B cell (primary cell): ENCODE measurements at regions of chr3 and their contacts with region 1.

Region 1: DNA sequence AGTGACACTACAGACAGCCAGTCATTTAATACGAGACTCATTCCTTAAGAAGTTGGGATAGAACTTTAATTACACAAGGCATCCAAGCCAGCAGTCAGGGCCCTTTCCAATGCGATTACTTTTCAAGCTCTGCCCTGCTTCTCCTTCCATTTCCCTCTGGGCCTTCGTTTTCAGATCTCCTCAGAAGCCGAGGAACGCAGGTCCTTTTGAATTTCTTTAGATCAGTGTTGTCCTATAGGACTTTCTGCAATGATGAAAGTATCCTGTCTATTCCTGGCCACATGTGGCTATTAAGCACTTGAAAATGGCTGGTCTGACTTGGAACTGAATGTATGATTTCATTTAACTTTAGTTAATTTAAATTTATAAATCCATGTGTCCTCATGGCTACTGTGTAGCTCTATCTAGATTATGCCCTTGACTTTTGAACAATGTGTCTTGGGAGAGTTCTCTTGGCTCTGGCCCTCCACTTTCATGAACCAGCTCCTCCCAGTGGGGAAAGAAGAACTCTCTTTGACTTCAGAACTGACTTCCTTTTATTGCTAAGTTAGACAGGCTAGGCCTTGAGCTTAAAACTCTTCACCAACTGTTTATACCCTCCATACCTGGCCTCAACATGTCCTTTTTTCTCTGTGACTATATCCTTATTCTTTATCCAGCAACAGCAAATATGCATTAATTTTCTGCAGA is 22.6 kb downstream of the TGFBR2 start:
- DNase-seq: peak; percentile 75
- ATAC-seq: peak; percentile 54
- H3K4me3 ChIP-seq: peak overlapping the region in 3 of 5 experiments; percentile 2 to 46 (median 26)
- H3K4me3 Mint-ChIP-seq: peak overlapping the region; percentile 72
- H3K27ac ChIP-seq: peak overlapping the region; percentile 73 to 89
- H3K27ac Mint-ChIP-seq: peak overlapping the region; percentile 87
- H3K4me1 ChIP-seq: peaks cover 91 to 99% of the 10 kb centered on the region in 2 donors
- H3K4me1 Mint-ChIP-seq: peaks cover 92% of the 10 kb centered on the region
- H3K27me3 ChIP-seq: no peaks in the 10 kb centered on the region
- H3K27me3 Mint-ChIP-seq: no peaks in the 10 kb centered on the region
- CTCF ChIP-seq: peak; percentile 53

Region 2: GRCh38 chr3:30112902-30113484 is 516.1 kb before region 1 on chr3:
- CTCF ChIA-PET with region 1: interaction called, 3 read pairs
- POLR2A ChIA-PET with region 1: no interaction called
- intact Hi-C with region 1: loop called (anchors 10 kb)
- DNase-seq: peak; percentile 58
- ATAC-seq: peak; percentile 41
- H3K4me3 ChIP-seq: no peak overlapping the region
- H3K4me3 Mint-ChIP-seq: no peak overlapping the region
- H3K27ac ChIP-seq: no peak overlapping the region
- H3K27ac Mint-ChIP-seq: no peak overlapping the region
- H3K4me1 ChIP-seq: no peaks in the 10 kb centered on the region
- H3K4me1 Mint-ChIP-seq: peaks cover 6% of the 10 kb centered on the region
- H3K27me3 ChIP-seq: no peaks in the 10 kb centered on the region
- H3K27me3 Mint-ChIP-seq: no peaks in the 10 kb centered on the region
- CTCF ChIP-seq: peak; percentile 73

Region 3: GRCh38 chr3:30319713-30320112 is 309.3 kb before region 1 on chr3:
- CTCF ChIA-PET with region 1: interaction called, 20 read pairs
- POLR2A ChIA-PET with region 1: interaction called, 3 read pairs
- intact Hi-C with region 1: loop called (anchors 2 kb)
- DNase-seq: peak; percentile 68
- ATAC-seq: peak; percentile 92
- H3K4me3 ChIP-seq: no peak overlapping the region
- H3K4me3 Mint-ChIP-seq: no peak overlapping the region
- H3K27ac ChIP-seq: no peak overlapping the region
- H3K27ac Mint-ChIP-seq: no peak overlapping the region
- H3K4me1 ChIP-seq: peaks cover 5% of the 10 kb centered on the region in 2 donors
- H3K4me1 Mint-ChIP-seq: peaks cover 4% of the 10 kb centered on the region
- H3K27me3 ChIP-seq: no peaks in the 10 kb centered on the region
- H3K27me3 Mint-ChIP-seq: no peaks in the 10 kb centered on the region
- CTCF ChIP-seq: peak; percentile 77

Region 4: DNA sequence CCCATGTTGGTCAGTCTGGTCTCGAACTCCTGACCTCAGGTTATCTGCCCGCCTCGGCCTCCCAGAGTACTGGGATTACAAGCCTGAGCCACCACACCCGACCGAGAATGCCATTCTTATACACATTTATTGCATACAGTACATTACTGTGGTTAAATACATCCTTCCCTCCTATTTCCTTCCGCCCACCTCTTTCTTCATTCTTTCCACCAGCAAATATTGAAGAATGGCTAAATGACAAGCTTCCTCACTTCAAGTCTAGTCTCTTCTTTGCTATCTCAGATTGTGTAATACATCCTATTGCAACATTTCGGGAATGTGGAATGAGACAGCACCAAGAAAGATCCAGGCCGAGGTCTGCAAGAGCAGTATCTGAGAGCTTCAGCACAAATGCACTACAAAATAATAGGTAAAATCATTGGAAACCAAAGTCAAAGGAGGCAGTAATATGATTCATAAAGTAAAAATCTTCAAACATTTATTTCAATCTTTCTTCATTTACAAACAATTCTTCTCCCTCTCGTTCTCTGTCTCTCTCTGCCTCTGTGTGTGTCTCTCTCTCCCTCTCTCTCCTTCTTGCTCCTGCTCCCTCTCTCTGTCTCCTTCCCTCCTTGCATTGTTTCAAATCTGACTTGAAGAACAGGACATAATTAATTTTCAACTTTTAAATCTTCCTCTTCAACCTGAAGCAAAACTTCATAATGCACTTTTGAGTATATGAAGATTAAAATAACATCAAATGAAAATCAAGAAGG is 117.3 kb before region 1 on chr3:
- CTCF ChIA-PET with region 1: no interaction called
- POLR2A ChIA-PET with region 1: no interaction called
- intact Hi-C with region 1: no loop called
- DNase-seq: no peak
- ATAC-seq: no peak
- H3K4me3 ChIP-seq: no peak overlapping the region
- H3K4me3 Mint-ChIP-seq: no peak overlapping the region
- H3K27ac ChIP-seq: no peak overlapping the region
- H3K27ac Mint-ChIP-seq: no peak overlapping the region
- H3K4me1 ChIP-seq: no peaks in the 10 kb centered on the region
- H3K4me1 Mint-ChIP-seq: peaks cover 15% of the 10 kb centered on the region
- H3K27me3 ChIP-seq: no peaks in the 10 kb centered on the region
- H3K27me3 Mint-ChIP-seq: no peaks in the 10 kb centered on the region
- CTCF ChIP-seq: no peak

Region 5: DNA sequence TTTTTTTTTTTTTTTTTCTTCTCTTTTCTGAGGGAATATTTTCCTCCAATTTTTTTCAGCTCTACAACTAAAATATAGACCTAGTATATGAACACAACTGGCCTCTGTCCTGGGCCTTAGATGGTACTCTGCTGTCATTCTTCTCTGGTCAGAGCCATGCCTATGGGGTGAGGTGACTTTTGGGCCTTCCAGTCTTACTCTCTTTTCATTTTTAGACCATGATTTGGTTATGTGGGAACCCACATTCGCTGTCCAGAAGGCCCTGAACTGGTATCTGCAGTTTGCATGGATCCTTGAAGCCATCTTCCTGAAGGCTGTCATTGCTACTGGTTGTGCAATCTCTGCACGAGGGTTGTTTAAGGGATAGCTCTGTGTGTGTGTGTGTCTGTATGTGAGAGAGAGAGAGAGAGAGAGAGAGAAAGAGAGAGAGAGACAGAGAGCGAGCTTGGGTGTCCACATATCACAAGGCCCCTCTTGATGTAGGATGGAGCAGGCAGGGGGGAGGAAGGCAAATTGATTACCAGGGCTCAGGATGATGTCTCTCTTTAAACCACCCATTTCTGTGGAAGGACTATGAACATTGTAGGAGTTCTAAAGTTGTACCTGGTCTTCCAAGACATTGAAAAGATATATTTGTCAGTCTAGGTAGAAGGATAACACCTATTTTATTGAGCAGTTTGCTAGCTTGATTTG is 15.8 kb before region 1 on chr3:
- CTCF ChIA-PET with region 1: interaction called, 19 read pairs
- POLR2A ChIA-PET with region 1: interaction called, 3 read pairs
- intact Hi-C with region 1: no loop called
- DNase-seq: no peak
- ATAC-seq: no peak
- H3K4me3 ChIP-seq: peak overlapping the region in 1 of 5 experiments; percentile 98
- H3K4me3 Mint-ChIP-seq: peak overlapping the region; percentile 92
- H3K27ac ChIP-seq: peak overlapping the region; percentile 17 to 79
- H3K27ac Mint-ChIP-seq: peak overlapping the region; percentile 33
- H3K4me1 ChIP-seq: peaks cover 84 to 95% of the 10 kb centered on the region in 2 donors
- H3K4me1 Mint-ChIP-seq: peaks cover 91% of the 10 kb centered on the region
- H3K27me3 ChIP-seq: no peaks in the 10 kb centered on the region
- H3K27me3 Mint-ChIP-seq: no peaks in the 10 kb centered on the region
- CTCF ChIP-seq: no peak

Region 6: GRCh38 chr3:30644593-30645012 is 15.6 kb after region 1 on chr3:
- CTCF ChIA-PET with region 1: interaction called, 8 read pairs
- POLR2A ChIA-PET with region 1: interaction called, 8 read pairs
- intact Hi-C with region 1: loop called (anchors 1 kb)
- DNase-seq: peak; percentile 75
- ATAC-seq: peak; percentile 48
- H3K4me3 ChIP-seq: peak overlapping the region in 2 of 5 experiments; percentile 11 to 48
- H3K4me3 Mint-ChIP-seq: peak overlapping the region; percentile 70
- H3K27ac ChIP-seq: peak overlapping the region; percentile 89 to 90
- H3K27ac Mint-ChIP-seq: peak overlapping the region; percentile 87
- H3K4me1 ChIP-seq: peaks cover 95 to 98% of the 10 kb centered on the region in 2 donors
- H3K4me1 Mint-ChIP-seq: peaks cover 89% of the 10 kb centered on the region
- H3K27me3 ChIP-seq: no peaks in the 10 kb centered on the region
- H3K27me3 Mint-ChIP-seq: no peaks in the 10 kb centered on the region
- CTCF ChIP-seq: no peak

Region 7: DNA sequence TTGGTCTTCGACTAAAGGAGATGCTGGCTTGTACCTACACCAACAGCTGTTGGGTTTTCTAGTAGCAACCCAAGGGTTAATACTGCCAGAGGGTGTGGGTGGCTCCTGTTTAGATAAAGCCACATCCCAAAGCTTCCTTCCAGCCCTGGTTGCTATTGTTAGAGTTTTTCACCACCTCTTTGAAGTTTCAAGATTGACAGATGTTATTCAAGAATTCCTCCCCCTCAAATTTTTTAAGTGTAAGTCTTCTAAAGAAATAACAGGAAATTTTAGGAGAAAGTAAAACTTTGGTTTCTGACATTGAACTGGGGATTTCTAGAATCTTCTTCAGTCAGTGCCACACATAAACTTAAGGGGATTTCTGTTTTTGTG is 38.2 kb after region 1 on chr3:
- CTCF ChIA-PET with region 1: interaction called, 5 read pairs
- POLR2A ChIA-PET with region 1: interaction called, 10 read pairs
- intact Hi-C with region 1: loop called (anchors 5 kb)
- DNase-seq: no peak
- ATAC-seq: peak; percentile 16
- H3K4me3 ChIP-seq: no peak overlapping the region
- H3K4me3 Mint-ChIP-seq: peak overlapping the region; percentile 29
- H3K27ac ChIP-seq: peak overlapping the region; percentile 62 to 90
- H3K27ac Mint-ChIP-seq: peak overlapping the region; percentile 57
- H3K4me1 ChIP-seq: peaks cover 72 to 74% of the 10 kb centered on the region in 2 donors
- H3K4me1 Mint-ChIP-seq: peaks cover 88% of the 10 kb centered on the region
- H3K27me3 ChIP-seq: no peaks in the 10 kb centered on the region
- H3K27me3 Mint-ChIP-seq: no peaks in the 10 kb centered on the region
- CTCF ChIP-seq: no peak

Region 8: GRCh38 chr3:30720586-30721313 is 91.7 kb after region 1 on chr3:
- CTCF ChIA-PET with region 1: no interaction called
- POLR2A ChIA-PET with region 1: no interaction called
- intact Hi-C with region 1: no loop called
- DNase-seq: no peak
- ATAC-seq: no peak
- H3K4me3 ChIP-seq: no peak overlapping the region
- H3K4me3 Mint-ChIP-seq: no peak overlapping the region
- H3K27ac ChIP-seq: no peak overlapping the region
- H3K27ac Mint-ChIP-seq: no peak overlapping the region
- H3K4me1 ChIP-seq: peaks cover 4 to 10% of the 10 kb centered on the region in 2 donors
- H3K4me1 Mint-ChIP-seq: peaks cover 9% of the 10 kb centered on the region
- H3K27me3 ChIP-seq: no peaks in the 10 kb centered on the region
- H3K27me3 Mint-ChIP-seq: peaks cover 9% of the 10 kb centered on the region
- CTCF ChIP-seq: no peak